A673 (cell line): ENCODE measurements at regions of chr4 and their contacts with region 1.

Region 1: DNA sequence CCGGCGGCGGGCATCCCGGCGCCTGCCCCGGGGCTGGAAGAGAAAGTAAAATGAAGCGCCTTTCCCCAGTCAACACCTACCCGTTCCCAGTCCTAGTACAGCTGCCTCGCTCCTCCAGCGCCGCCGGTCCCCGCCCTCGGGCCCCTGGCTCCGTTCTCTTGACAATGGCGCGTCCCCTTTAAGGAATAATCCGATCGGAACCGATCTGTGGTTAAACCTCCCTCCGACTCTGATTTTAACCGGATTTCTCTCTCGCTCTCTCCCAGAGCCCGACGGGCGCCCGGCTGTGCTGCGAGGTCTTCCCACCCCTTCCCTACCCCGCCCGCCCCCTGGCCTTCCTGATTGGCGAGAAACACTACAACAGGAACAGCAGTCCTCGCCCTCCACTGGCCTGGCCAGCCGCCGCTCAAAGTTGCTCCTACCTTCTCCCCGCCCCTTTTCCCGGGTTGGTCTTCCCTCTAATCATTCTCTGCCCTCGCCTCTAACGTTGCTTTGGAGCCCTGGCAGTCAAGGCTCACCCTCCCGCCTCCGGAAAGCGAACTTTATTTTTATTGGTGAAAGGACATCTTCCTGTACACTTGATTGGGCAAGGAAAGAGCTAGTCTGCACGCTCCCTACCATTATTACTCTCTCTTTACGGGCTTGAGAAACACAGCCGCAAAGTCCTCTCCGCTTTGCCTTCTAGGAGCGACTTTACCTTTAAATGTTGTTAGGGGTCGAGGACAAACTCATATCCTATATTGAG is at the start of gene FRYL:
- DNase-seq: peak; percentile 100
- H3K4me3 ChIP-seq: peak within 1 kb of the TSS; percentile 96
- H3K27ac ChIP-seq: peak within 1 kb of the TSS; percentile 93
- H3K4me1 ChIP-seq: peaks cover 25% of the 10 kb centered on the region
- H3K27me3 ChIP-seq: no peaks in the 10 kb centered on the region
- CTCF ChIP-seq: no peak
- total RNA-seq, gene FRYL: 43.1 and 47.6 TPM in 2 replicates

Region 2: DNA sequence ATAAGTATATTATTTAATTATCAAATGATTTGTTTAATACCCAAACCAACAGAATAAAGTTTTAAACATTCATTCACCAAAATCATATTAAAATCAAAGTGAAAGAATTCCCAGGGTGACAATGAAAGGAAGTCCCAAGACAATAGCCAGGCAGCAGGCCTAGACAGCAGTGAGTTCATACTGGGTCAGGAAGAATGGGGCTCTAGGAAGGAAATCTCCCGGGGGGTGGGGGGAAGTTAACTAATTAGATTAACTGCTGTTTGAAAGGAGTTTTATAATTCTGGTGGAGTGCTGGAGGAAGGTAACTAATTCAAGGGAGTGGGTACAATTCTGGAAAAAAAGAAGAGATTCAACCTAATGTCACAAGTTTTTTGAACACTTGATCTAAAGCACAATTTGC is 186.0 kb before region 1 on chr4:
- CTCF ChIA-PET with region 1: no interaction called
- POLR2A ChIA-PET with region 1: no interaction called
- intact Hi-C with region 1: loop called (anchors 10 kb)
- DNase-seq: peak; percentile 97
- H3K4me3 ChIP-seq: no peak overlapping the region
- H3K27ac ChIP-seq: no peak overlapping the region
- H3K4me1 ChIP-seq: peaks cover 25% of the 10 kb centered on the region
- H3K27me3 ChIP-seq: no peaks in the 10 kb centered on the region
- CTCF ChIP-seq: no peak

Region 3: GRCh38 chr4:48801734-48802133 is 21.6 kb after region 1 on chr4:
- CTCF ChIA-PET with region 1: interaction called, 11 read pairs
- POLR2A ChIA-PET with region 1: no interaction called
- intact Hi-C with region 1: no loop called
- DNase-seq: no peak
- H3K4me3 ChIP-seq: no peak overlapping the region
- H3K27ac ChIP-seq: no peak overlapping the region
- H3K4me1 ChIP-seq: no peaks in the 10 kb centered on the region
- H3K27me3 ChIP-seq: no peaks in the 10 kb centered on the region
- CTCF ChIP-seq: no peak

Region 4: DNA sequence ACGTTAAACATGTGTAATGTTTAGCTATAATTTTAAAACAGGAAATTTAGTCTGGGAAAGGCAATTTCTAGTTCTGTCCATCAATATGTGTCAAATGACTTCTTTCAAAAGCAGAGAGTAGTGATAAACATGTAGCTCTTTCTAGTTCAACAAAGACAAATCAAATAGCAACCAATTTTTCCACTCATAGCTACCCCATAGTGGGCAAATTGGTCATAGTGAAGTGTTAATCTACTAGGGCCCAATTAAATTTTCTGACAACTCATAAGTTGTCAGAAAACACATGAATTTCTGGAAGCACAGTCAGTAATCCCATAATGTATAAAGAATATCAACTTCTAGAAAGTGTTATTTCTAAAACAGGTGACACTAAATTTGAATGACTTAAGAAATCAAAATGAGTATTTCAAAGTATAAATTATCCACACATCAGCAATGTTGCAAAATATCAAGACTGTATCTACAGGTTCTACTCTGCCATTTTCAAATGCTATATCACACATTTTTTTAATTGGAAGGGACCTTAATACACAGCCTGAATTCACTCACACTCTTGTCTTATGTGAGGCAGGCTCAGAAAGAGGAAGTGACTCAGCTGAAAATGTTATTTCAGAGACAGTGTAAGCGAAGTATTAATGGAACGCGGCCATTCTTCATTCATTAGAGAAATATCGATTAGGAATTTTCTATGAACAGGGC is 118.7 kb after region 1 on chr4:
- CTCF ChIA-PET with region 1: no interaction called
- POLR2A ChIA-PET with region 1: no interaction called
- intact Hi-C with region 1: loop called (anchors 2 kb)
- DNase-seq: peak; percentile 69
- H3K4me3 ChIP-seq: no peak overlapping the region
- H3K27ac ChIP-seq: peak overlapping the region; percentile 79
- H3K4me1 ChIP-seq: peaks cover 43% of the 10 kb centered on the region
- H3K27me3 ChIP-seq: no peaks in the 10 kb centered on the region
- CTCF ChIP-seq: no peak